Endothelial cell of umbilical vein (primary cell): ENCODE measurements at regions of chr10 and their contacts with region 1.

Region 1: DNA sequence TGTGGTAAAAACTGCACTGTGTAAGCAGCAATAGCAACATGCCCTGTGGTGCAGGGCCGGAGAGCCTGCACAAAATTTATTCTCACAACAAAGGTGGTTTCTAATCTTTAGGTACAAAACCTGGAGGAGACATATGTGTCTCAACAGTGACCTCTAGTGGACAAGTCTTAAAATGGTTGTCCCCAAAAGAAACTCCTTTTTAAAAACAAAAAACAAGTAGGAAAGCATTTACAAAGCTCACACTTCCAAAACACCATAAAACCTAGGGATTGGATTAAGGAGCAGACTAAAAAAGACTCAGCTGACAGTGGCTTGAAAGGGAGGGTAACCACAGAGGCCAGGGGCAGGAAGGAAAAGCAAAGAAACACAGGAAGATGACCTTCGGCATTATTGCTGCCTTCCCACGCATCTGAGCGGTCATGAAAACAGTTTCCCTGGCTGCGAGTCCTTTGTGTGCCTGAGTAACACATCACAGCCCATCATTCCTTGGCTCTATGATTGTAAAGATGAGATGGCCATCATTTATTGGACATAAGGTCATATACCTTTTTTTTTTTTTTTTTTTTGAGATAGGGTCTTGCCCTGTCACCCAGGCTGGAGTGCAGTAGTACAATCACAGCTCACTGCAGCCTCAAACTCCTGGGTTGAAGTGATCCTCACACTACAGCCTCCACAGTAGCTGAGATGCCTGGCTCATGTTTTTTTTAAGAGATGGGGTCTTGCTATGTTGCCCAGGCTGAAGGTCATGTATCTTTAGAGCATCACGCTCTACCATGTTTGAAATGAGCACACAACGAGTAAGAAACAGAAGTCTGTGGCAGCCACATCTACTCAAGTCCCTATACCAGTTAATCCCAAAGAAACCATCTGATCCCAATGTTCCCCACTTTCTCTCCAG is 39.5 kb downstream of the RSU1 start:
- DNase-seq: peak; percentile 97
- H3K4me3 ChIP-seq: peak overlapping the region in 1 of 3 experiments; percentile 38
- H3K27ac ChIP-seq: peak overlapping the region; percentile 75
- H3K4me1 ChIP-seq: peaks cover 22% of the 10 kb centered on the region
- H3K27me3 ChIP-seq: no peaks in the 10 kb centered on the region
- CTCF ChIP-seq: peak; percentile 43 to 58
- POLR2A ChIP-seq: no peak

Region 2: DNA sequence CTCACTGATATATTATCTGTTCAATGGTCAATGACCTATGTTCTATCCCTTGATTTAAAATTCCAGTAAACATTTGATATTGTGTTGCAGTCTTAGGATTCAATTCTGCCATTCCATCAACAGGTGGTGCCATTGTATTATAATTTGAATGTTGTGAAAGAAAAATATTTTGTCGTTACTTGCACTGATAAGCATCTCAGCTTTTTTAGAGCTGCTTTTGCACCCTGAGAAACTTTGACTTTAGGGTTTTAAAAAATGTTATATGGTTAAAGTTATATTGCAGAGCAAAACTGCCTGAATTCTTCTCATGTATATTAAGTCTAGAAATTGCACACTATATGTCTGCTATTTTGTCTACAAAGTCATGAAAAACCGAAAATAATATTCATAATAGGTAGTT is 898.7 kb before region 1 on chr10:
- CTCF ChIA-PET with region 1: interaction called, 8 read pairs
- POLR2A ChIA-PET with region 1: no interaction called
- dilution Hi-C with region 1: no loop called
- intact Hi-C with region 1: loop called (anchors 1 kb)
- DNase-seq: peak; percentile 66
- H3K4me3 ChIP-seq: no peak overlapping the region
- H3K27ac ChIP-seq: no peak overlapping the region
- H3K4me1 ChIP-seq: no peaks in the 10 kb centered on the region
- H3K27me3 ChIP-seq: peaks cover 15 to 23% of the 10 kb centered on the region in 2 experiments
- CTCF ChIP-seq: peak; percentile 18 to 55
- POLR2A ChIP-seq: no peak

Region 3: GRCh38 chr10:16436758-16437539 is 340.8 kb before region 1 on chr10 and contains the start of gene PTER:
- CTCF ChIA-PET with region 1: interaction called, 3 read pairs
- POLR2A ChIA-PET with region 1: no interaction called
- dilution Hi-C with region 1: no loop called
- intact Hi-C with region 1: loop called (anchors 1 kb)
- DNase-seq: peak; percentile 76
- H3K4me3 ChIP-seq: peak within 1 kb of the TSS; percentile 10 to 54 (median 41)
- H3K27ac ChIP-seq: no peak within 1 kb of the TSS
- H3K4me1 ChIP-seq: peaks cover 3% of the 10 kb centered on the region
- H3K27me3 ChIP-seq: no peaks in the 10 kb centered on the region
- CTCF ChIP-seq: no peak
- POLR2A ChIP-seq: peak; percentile 48
- total RNA-seq, gene PTER: 3.6 and 4.6 TPM in 2 replicates

Region 4: DNA sequence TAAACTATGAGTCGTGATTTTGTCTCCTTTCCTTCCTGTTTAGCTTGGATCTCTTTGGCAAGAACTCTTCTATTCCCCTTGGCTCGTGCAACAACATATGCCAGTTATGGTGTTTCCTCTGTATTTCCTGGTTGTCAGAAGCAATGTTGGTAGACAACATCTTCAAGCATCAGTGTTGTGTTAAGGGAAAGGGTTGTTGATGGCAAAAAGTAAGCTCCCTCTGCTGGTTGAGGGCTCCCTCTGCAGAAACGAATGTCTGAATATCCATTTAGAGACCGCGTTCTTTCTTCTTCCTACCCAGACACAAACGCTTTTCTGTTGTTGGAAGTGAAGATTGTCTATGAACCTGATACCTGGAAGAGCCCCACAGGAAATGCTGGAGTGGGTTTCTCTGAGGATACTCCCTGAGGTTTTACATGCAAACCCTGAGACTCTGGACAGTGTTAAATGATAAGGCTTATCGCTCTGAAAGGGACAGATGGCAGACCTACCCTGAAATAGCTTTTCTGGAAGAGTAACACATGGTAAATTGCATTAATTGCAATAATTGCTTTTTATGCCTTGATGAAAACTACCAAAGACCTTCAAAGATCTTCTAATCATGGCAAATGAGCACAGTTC is 232.5 kb before region 1 on chr10:
- CTCF ChIA-PET with region 1: interaction called, 6 read pairs
- POLR2A ChIA-PET with region 1: no interaction called
- dilution Hi-C with region 1: no loop called
- intact Hi-C with region 1: loop called (anchors 1 kb)
- DNase-seq: peak; percentile 43
- H3K4me3 ChIP-seq: no peak overlapping the region
- H3K27ac ChIP-seq: no peak overlapping the region
- H3K4me1 ChIP-seq: no peaks in the 10 kb centered on the region
- H3K27me3 ChIP-seq: peaks cover 0 to 1% of the 10 kb centered on the region in 2 experiments
- CTCF ChIP-seq: peak; percentile 63 to 67
- POLR2A ChIP-seq: no peak

Region 5: DNA sequence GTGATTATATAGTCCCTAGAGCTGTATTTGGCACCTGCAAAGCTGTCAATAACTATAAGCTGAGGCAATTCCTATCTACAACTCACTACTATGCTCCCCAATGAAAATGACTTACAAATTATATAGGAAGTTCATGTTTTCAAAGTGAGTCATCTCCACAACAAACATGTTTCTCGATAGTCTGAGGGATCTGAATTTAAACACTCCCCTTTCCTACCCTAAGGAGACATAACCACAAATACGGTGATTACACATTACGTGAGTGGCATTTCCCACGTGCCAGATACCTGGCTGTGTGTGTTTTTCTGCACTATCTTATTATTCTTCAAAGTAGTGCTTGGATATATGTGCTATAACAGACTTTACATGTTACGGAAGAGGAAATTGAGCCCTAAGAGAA is 133.6 kb before region 1 on chr10:
- CTCF ChIA-PET with region 1: no interaction called
- POLR2A ChIA-PET with region 1: no interaction called
- dilution Hi-C with region 1: no loop called
- intact Hi-C with region 1: loop called (anchors 10 kb)
- DNase-seq: peak; percentile 77
- H3K4me3 ChIP-seq: no peak overlapping the region
- H3K27ac ChIP-seq: peak overlapping the region; percentile 21
- H3K4me1 ChIP-seq: peaks cover 15% of the 10 kb centered on the region
- H3K27me3 ChIP-seq: no peaks in the 10 kb centered on the region
- CTCF ChIP-seq: no peak
- POLR2A ChIP-seq: no peak

Region 6: GRCh38 chr10:16765509-16766375 is 12.0 kb before region 1 on chr10:
- CTCF ChIA-PET with region 1: interaction called, 10 read pairs
- POLR2A ChIA-PET with region 1: no interaction called
- dilution Hi-C with region 1: no loop called
- intact Hi-C with region 1: no loop called
- DNase-seq: no peak
- H3K4me3 ChIP-seq: no peak overlapping the region
- H3K27ac ChIP-seq: no peak overlapping the region
- H3K4me1 ChIP-seq: no peaks in the 10 kb centered on the region
- H3K27me3 ChIP-seq: no peaks in the 10 kb centered on the region
- CTCF ChIP-seq: no peak
- POLR2A ChIP-seq: no peak

Region 7: GRCh38 chr10:16809074-16809718 is 31.5 kb after region 1 on chr10:
- CTCF ChIA-PET with region 1: interaction called, 23 read pairs
- POLR2A ChIA-PET with region 1: interaction called, 5 read pairs
- dilution Hi-C with region 1: no loop called
- intact Hi-C with region 1: loop called (anchors 1 kb)
- DNase-seq: peak; percentile 64
- H3K4me3 ChIP-seq: no peak overlapping the region
- H3K27ac ChIP-seq: no peak overlapping the region
- H3K4me1 ChIP-seq: peaks cover 2% of the 10 kb centered on the region
- H3K27me3 ChIP-seq: no peaks in the 10 kb centered on the region
- CTCF ChIP-seq: peak; percentile 70 to 73
- POLR2A ChIP-seq: no peak